ENCODE measurements at regions of chr5 and their contacts with region 1.

Region 1: DNA sequence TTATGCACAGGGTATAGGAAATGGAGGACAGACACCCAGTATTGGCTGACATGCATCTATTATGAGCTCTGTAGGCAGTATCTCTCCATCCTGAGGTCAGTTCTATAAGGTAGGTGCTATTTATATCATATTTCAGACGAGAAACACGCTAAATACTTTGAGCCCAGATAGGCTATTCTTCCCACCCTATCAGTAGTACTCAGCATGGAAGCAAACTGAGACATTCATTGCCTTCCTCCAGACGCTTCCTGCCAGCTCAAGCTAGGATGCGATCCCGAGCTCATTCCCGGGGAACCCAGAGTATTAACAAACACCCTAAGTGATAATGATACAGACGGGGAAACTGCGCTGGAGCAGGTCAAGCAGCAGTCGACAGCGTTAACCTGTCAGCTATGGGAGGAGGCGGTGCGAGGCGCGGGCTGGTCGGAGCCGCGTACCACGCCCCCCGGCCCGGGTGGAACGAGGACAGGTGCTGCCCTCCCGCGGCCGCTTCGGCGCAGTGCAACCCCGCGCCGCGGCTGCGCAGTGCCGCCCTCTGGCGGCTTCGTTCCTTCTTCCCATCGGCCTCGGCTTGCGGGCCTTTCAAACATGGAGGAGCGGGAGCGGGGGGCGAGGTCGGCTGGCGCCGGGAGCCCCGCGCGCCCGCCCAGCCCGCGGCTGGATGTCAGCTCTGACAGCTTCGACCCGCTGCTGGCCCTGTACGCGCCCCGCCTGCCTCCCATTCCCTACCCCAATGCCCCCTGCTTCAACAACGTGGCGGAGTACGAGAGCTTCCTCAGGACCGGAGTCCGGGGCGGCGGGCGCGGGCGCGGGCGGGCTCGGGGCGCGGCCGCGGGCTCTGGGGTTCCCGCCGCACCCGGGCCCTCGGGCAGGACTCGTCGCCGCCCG is at the start of gene LSM11:
- DNase-seq: peak; percentile 97
- CTCF ChIP-seq: peak; percentile 100

Region 2: GRCh38 chr5:157328277-157328912 is 415.0 kb before region 1 on chr5:
- in situ Hi-C with region 1: loop called (anchors 25 kb)
- DNase-seq: peak; percentile 77
- CTCF ChIP-seq: peak; percentile 91

Region 3: GRCh38 chr5:157384971-157385709 is 358.3 kb before region 1 on chr5:
- in situ Hi-C with region 1: no loop called
- DNase-seq: no peak
- CTCF ChIP-seq: no peak